Activated CD4-positive, alpha-beta T cell treated with anti-CD3 and anti-CD28 coated beads for 36 hours (primary cell): ENCODE measurements at regions of chr3 and their contacts with region 1.

Region 1: DNA sequence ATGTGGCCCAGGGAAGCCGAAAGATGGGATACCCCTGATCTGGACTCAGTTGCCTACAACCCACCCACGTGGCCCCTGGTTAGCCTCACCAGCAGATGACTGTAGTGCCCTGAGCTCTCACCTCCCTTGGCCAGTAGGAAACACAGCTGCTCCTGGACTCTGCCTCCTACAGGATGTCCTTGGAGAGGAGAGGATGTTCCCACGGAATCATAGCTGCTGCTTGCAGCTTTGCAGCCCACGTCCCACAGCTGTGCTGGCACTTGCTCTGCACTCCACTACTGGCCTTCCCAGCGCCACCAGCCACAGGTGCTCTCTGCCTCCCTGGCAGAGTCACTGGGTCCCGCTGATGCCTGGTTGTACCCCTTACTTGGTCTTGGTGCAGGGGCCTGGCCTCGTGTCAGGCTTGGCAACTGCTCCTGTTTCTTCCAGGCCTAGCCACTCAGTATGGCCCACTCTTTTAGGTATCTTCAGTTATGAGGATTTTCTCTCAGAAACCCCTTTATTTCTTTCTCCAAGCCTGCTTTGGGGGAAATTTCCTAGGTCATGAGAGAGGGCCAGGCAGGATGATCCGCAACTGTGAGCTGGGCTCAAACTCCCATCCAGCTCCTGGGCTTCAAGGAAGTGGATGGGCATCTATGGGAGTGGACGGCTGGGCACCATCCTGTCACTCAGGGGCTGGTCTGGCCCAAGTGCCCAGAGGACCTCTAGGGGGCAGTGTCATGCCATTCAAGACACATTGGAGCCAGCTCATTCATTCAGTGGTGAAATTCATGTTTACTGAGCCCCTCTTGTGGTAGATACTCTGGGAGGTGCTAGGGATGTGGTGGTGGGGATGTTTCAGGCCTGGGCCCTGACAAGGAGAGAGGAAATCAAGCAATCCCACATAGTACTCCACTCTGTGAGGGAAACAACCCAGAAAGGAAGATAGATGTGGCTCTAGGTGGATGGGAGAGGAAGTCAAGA is 16.2 kb upstream of the VILL start:
- DNase-seq: peak; percentile 83
- ATAC-seq: peak; percentile 98
- H3K4me3 Mint-ChIP-seq: no peak overlapping the region
- H3K27ac Mint-ChIP-seq: no peak overlapping the region
- H3K4me1 Mint-ChIP-seq: peaks cover 2% of the 10 kb centered on the region
- H3K27me3 Mint-ChIP-seq: no peaks in the 10 kb centered on the region

Region 2: DNA sequence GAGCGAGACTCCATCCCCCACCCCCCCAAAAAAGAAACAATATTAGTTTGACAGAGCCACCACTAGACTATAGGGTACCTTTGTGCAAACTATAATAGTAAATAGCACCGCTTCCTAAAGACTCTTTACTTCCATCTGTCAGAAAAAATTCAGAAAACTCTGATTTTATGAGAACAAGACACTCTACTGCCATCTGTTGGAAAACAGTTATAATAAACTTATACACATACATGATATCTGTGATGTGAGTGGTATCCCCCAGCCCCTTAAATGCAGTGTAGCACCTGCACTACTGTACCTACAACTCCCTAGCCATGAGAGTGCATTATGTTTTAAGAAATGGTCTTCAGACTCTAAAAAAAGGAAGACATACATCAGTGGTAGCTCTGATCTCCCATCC is 159.9 kb before region 1 on chr3:
- CTCF ChIA-PET with region 1: no interaction called
- POLR2A ChIA-PET with region 1: no interaction called
- intact Hi-C with region 1: no loop called
- DNase-seq: no peak
- ATAC-seq: no peak
- H3K4me3 Mint-ChIP-seq: no peak overlapping the region
- H3K27ac Mint-ChIP-seq: no peak overlapping the region
- H3K4me1 Mint-ChIP-seq: no peaks in the 10 kb centered on the region
- H3K27me3 Mint-ChIP-seq: peaks cover 3% of the 10 kb centered on the region

Region 3: DNA sequence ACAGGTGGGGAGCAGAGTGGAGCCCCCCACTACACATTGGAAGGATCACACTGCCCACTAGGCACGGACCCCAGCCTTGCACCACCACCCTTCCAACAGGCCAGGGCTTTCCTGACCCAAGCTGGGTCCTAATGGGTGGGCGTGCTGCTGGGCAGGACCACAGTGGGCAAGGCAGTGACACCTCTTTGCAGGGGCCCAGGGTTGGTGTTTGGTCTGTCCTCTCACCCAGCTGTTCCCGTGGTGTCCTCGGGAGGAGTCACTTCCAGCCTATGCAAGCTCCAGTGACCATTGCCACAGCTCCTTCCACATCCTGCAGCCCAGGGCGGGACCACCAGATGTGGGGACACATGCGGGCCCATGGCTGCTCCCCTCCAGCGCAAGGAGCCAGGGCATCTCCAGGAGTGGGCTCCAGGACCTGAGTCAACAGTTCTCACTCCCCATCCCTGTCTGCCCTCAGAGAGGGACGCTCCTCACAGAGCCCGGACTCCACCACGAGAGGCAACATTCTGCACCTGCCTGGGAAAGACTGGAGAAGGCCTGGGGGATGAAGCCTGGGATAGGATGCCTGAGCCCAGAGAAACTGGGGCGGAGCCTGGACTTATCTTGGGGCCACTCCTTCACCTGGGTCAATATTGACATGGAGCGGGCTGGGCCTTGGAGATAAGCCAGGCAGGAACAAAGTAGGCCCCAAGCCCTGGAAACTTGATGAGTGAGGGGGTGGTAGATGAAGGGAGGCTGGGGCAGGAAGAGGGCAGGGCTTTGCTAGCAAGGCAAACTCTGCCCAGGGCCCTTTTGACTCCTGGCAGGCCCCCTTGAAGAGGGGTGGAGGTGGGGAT is 12.3 kb after region 1 on chr3:
- CTCF ChIA-PET with region 1: interaction called, 16 read pairs
- POLR2A ChIA-PET with region 1: no interaction called
- intact Hi-C with region 1: no loop called
- DNase-seq: no peak
- ATAC-seq: no peak
- H3K4me3 Mint-ChIP-seq: no peak overlapping the region
- H3K27ac Mint-ChIP-seq: no peak overlapping the region
- H3K4me1 Mint-ChIP-seq: peaks cover 3% of the 10 kb centered on the region
- H3K27me3 Mint-ChIP-seq: no peaks in the 10 kb centered on the region

Region 4: DNA sequence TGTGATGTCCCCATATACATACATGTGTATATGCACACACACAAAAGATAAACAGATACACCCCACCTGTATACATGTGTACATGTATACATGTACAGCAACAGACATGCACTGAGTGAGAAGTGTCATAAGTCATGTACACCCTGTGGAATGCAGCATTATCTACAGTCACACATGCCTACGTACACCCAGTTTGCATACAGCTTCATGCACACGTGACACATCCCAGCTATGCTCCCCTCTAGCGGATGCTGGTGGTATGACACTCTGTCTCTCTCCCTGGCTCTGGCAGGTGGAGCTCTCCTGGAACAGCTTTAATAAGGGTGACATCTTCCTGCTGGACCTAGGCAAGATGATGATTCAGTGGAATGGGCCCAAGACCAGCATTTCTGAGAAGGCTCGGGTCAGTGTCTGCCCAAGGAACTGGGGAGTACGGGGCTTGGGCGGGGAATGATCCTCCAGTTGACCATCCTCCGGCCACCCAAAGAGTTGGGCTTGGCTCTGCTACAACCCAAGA is 22.4 kb after region 1 on chr3:
- CTCF ChIA-PET with region 1: interaction called, 18 read pairs
- POLR2A ChIA-PET with region 1: no interaction called
- intact Hi-C with region 1: loop called in 1 of 2 experiments (anchors 1 kb)
- DNase-seq: peak; percentile 92
- ATAC-seq: peak; percentile 57
- H3K4me3 Mint-ChIP-seq: no peak overlapping the region
- H3K27ac Mint-ChIP-seq: peak overlapping the region; percentile 96
- H3K4me1 Mint-ChIP-seq: peaks cover 49% of the 10 kb centered on the region
- H3K27me3 Mint-ChIP-seq: no peaks in the 10 kb centered on the region

Region 5: DNA sequence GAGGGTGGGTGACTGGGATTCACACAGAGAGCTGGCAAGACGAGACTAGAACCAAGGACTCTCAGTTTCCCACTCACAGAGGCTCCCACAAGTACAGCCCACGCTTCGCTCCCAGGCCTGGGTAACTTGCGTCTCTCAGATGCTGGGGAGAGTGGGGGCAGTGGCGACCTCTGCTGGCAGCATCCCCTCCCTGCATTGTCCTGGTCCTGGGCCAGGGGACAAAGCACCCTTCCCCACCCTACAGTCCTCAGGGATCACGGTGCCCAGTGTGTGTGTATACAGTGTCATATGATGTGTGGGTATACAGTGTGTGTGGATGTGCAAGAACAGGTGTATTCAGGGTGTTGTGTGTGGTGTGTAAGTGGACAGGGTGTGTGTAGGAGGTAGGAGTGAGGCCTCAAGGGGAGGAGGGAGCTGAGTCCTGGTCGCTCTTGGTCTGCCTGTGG is 29.0 kb after region 1 on chr3:
- CTCF ChIA-PET with region 1: interaction called, 4 read pairs
- POLR2A ChIA-PET with region 1: no interaction called
- intact Hi-C with region 1: loop called in 1 of 2 experiments (anchors 1 kb)
- DNase-seq: peak; percentile 72
- ATAC-seq: peak; percentile 31
- H3K4me3 Mint-ChIP-seq: no peak overlapping the region
- H3K27ac Mint-ChIP-seq: peak overlapping the region; percentile 0
- H3K4me1 Mint-ChIP-seq: peaks cover 19% of the 10 kb centered on the region
- H3K27me3 Mint-ChIP-seq: no peaks in the 10 kb centered on the region

Region 6: DNA sequence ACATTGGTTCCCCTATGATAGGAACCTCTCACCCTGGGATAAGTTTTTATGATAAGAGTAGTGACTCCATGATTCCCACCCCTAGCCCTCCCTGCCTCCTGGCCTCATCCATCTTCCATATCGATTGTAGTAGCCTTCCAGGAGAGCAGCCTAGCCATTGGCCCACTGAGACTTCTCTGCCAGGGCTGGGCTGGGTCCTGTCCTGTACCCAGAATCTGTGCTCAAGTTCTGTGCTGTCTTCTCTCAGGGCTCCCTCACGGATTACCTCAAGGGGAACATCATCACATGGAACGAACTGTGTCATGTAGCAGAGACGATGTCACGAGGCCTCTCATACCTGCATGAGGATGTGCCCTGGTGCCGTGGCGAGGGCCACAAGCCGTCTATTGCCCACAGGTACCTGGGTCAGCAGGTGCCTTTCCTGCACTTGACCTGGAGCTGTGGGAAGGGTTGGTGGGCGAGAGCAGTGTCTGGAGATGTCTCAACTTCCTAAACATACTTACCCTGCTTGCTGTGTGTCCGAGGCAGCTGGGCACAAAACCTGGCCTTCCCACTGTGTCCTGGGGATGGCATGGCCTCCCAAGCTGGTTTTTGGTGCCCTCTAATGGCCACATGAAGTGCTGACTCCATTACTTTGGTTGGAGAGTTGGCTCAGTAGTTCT is 505.2 kb after region 1 on chr3:
- CTCF ChIA-PET with region 1: interaction called, 14 read pairs
- POLR2A ChIA-PET with region 1: no interaction called
- intact Hi-C with region 1: loop called in 1 of 2 experiments (anchors 1 kb)
- DNase-seq: peak; percentile 64
- ATAC-seq: peak; percentile 78
- H3K4me3 Mint-ChIP-seq: no peak overlapping the region
- H3K27ac Mint-ChIP-seq: no peak overlapping the region
- H3K4me1 Mint-ChIP-seq: peaks cover under 1% of the 10 kb centered on the region
- H3K27me3 Mint-ChIP-seq: no peaks in the 10 kb centered on the region